Colonic mucosa (tissue), 4 donors: ENCODE measurements at regions of chr11 and their contacts with region 1.

Region 1: GRCh38 chr11:111938687-111939160 is 1.6 kb downstream of the DIXDC1 start:
- DNase-seq: no peak
- H3K4me3 ChIP-seq: no peak overlapping the region
- H3K27ac ChIP-seq: peak overlapping the region; percentile 28
- H3K4me1 ChIP-seq: no peaks in the 10 kb centered on the region
- H3K27me3 ChIP-seq: no peaks in the 10 kb centered on the region
- CTCF ChIP-seq: no peak

Region 2: GRCh38 chr11:111977146-111978027 is 38.7 kb after region 1 on chr11:
- intact Hi-C with region 1: loop called (anchors 5 kb)
- DNase-seq: peak; percentile 67
- H3K4me3 ChIP-seq: peak overlapping the region; percentile 46
- H3K27ac ChIP-seq: peak overlapping the region; percentile 34
- H3K4me1 ChIP-seq: no peaks in the 10 kb centered on the region
- H3K27me3 ChIP-seq: no peaks in the 10 kb centered on the region
- CTCF ChIP-seq: no peak

Region 3: GRCh38 chr11:112086422-112087191 is 147.9 kb after region 1 on chr11 and contains the starts of genes SDHD and TIMM8B:
- intact Hi-C with region 1: loop called (anchors 10 kb)
- DNase-seq: peak; percentile 97
- H3K4me3 ChIP-seq: peak within 1 kb of the TSS; percentile 67
- H3K27ac ChIP-seq: peak within 1 kb of the TSS; percentile 69
- H3K4me1 ChIP-seq: peaks cover 6% of the 10 kb centered on the region
- H3K27me3 ChIP-seq: no peaks in the 10 kb centered on the region
- CTCF ChIP-seq: no peak
- total RNA-seq, gene SDHD: 274 to 276 TPM
- total RNA-seq, gene TIMM8B: 40.7 to 93.9 TPM